K562 (cell line): ENCODE measurements at regions of chr22 and their contacts with region 1.

Region 1: DNA sequence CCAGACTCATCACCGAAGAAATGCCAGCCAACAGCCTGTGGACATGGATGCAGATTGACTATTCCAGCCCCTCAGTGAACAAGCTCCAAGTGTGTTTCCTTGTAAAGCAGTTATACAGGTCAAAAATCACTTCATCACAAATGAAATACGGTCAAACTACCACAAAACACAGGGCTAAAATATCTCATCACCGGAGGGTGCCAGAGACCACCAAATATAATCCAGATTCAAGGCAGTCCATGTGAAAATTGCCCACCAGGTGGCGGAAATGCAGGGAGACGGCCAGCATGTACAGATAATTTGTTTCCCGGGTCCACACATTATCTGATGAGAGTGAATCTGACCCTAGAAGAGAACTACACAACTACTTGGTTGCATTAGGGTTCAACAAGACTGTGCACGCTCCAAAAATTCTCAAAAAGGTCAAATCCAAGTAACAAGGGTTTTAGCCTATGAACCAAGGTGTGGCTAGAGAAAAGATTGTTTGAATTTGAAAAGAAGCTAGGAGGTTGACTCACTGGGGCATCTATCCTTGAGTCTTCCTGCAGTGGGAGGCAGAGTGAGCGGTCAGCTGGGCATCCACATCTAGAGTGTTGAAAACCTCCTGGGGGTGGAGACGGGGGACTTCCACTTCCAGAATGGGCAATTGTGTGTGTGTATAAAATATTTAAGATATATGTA is 71.7 kb downstream of the IGLL5 start:
- DNase-seq: peak; percentile 98 to 99 (median 99)
- ATAC-seq: peak; percentile 85
- H3K4me3 ChIP-seq: no peak overlapping the region
- H3K27ac ChIP-seq: no peak overlapping the region
- H3K4me1 ChIP-seq: no peaks in the 10 kb centered on the region
- H3K27me3 ChIP-seq: peaks cover 3 to 6% of the 10 kb centered on the region in 2 experiments; a peak in 3 of 5 replicates
- CTCF ChIP-seq: no peak
- EP300 ChIP-seq: no peak
- POLR2A ChIP-seq: no peak
- RAD21 ChIP-seq: no peak

Region 2: DNA sequence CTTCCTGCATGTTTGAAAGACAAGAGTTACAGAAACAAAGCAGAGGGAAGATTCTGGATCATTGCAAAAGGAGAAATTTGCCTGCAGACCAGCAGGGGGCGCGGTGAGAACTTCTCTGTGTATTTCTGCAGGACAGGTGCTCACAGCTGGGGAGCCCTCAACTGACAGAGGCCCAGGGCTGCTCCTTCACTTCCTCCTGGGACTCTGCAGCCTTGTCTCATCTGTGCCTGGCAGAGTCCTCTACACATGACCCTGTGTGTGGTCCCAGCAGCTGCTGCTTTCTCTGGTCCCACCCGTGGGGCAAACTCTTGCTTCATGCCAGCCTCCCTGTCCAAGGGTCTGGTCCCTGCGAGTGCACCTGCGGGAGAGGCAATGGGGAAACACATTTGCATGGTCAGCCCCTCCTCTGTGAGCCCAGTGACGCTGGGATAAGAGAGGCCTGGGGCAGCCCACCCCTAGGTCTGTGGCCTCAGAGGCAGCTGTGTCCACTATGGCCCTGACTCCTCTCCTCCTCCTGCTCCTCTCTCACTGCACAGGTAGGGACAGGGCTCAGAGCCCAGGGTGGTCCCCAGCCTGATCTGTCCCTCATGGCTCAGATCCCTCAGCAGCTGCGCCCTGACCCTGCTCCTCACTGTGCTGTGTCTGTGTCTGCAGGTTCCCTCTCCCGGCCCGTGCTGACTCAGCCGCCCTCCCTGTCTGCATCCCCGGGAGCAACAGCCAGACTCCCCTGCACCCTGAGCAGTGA is 757.9 kb before region 1 on chr22:
- CTCF ChIA-PET with region 1: no interaction called
- POLR2A ChIA-PET with region 1: no interaction called
- in situ Hi-C with region 1: no loop called
- intact Hi-C with region 1: loop called (anchors 5 kb)
- DNase-seq: peak; percentile 90 to 95 (median 91)
- ATAC-seq: peak; percentile 87
- H3K4me3 ChIP-seq: no peak overlapping the region
- H3K27ac ChIP-seq: no peak overlapping the region
- H3K4me1 ChIP-seq: peaks cover 0 to 13% of the 10 kb centered on the region in 2 experiments; a peak in 2 of 5 replicates
- H3K27me3 ChIP-seq: peaks cover 44 to 70% of the 10 kb centered on the region in 2 experiments
- CTCF ChIP-seq: peak in 2 of 3 experiments; percentile 99 to 100; a peak in 4 of 6 replicates
- EP300 ChIP-seq: 0 out of 2 replicates have a peak, but pooled peaks have one; percentile 19
- POLR2A ChIP-seq: no peak
- RAD21 ChIP-seq: peak; percentile 36 to 83

Region 3: GRCh38 chr22:22748297-22748743 is 211.0 kb before region 1 on chr22:
- CTCF ChIA-PET with region 1: interaction called, 54 read pairs
- POLR2A ChIA-PET with region 1: interaction called, 5 read pairs
- in situ Hi-C with region 1: no loop called
- intact Hi-C with region 1: loop called (anchors 1 kb)
- DNase-seq: peak; percentile 73 to 86 (median 82)
- ATAC-seq: peak; percentile 87
- H3K4me3 ChIP-seq: no peak overlapping the region
- H3K27ac ChIP-seq: no peak overlapping the region
- H3K4me1 ChIP-seq: no peaks in the 10 kb centered on the region
- H3K27me3 ChIP-seq: peaks cover 4 to 30% of the 10 kb centered on the region in 2 experiments; a peak in 3 of 5 replicates
- CTCF ChIP-seq: no peak
- EP300 ChIP-seq: no peak
- POLR2A ChIP-seq: no peak
- RAD21 ChIP-seq: peak in 1 of 2 experiments; percentile 76; a peak in 2 of 4 replicates

Region 4: GRCh38 chr22:22810018-22810427 is 149.3 kb before region 1 on chr22:
- CTCF ChIA-PET with region 1: interaction called, 118 read pairs
- POLR2A ChIA-PET with region 1: interaction called, 9 read pairs
- in situ Hi-C with region 1: no loop called
- intact Hi-C with region 1: loop called (anchors 1 kb)
- DNase-seq: peak; percentile 97 to 100 (median 98)
- ATAC-seq: peak; percentile 96
- H3K4me3 ChIP-seq: no peak overlapping the region
- H3K27ac ChIP-seq: no peak overlapping the region
- H3K4me1 ChIP-seq: peaks cover 0 to 4% of the 10 kb centered on the region in 2 experiments; a peak in 1 of 5 replicates
- H3K27me3 ChIP-seq: peaks cover 8 to 19% of the 10 kb centered on the region in 2 experiments; a peak in 3 of 5 replicates
- CTCF ChIP-seq: no peak
- EP300 ChIP-seq: no peak
- POLR2A ChIP-seq: no peak
- RAD21 ChIP-seq: no peak

Region 5: DNA sequence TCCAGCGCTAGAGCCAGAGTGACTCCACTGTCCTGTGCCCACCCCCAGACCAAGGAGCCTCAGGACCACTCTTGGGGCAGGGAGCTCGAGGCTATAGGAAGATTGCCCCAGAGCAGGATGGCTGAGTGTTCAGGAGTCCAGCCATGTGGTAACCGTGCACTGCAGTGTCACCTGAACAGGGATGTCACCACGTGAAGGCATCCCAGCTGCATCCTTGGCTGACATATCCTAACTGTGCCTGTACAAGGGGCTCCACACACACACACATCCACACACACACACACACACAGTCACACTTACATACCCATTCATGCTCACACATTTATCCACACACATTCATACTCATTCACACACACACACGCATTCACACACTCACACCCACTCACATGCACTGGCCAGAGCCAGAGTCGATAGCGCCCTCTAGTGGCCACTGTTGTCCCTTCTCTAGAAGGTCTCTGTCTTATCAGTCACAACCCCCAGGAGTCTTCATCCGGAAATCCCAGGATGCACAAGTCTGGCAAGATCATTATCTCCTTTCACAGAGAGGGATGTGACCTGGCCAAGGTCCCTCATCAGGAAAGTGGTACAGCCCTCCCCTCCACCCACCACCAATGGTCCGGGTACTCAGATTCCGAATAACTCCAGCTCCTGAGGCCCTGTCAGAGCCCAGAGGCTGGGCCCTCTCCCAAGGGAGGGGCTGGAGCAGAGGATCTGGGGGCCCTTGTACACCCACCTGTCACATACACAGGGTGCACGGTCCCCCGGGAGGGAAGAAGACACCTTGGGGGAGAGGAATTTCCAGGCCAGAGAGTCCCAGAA is 16.6 kb before region 1 on chr22:
- CTCF ChIA-PET with region 1: interaction called, 30 read pairs
- POLR2A ChIA-PET with region 1: interaction called, 17 read pairs
- in situ Hi-C with region 1: no loop called
- intact Hi-C with region 1: no loop called
- DNase-seq: peak; percentile 99 to 100 (median 100)
- ATAC-seq: peak; percentile 94
- H3K4me3 ChIP-seq: no peak overlapping the region
- H3K27ac ChIP-seq: no peak overlapping the region
- H3K4me1 ChIP-seq: peaks cover 0 to 3% of the 10 kb centered on the region in 2 experiments; a peak in 1 of 5 replicates
- H3K27me3 ChIP-seq: peaks cover 19 to 38% of the 10 kb centered on the region in 2 experiments; a peak in 4 of 5 replicates
- CTCF ChIP-seq: no peak
- EP300 ChIP-seq: no peak
- POLR2A ChIP-seq: no peak
- RAD21 ChIP-seq: no peak

Region 6: DNA sequence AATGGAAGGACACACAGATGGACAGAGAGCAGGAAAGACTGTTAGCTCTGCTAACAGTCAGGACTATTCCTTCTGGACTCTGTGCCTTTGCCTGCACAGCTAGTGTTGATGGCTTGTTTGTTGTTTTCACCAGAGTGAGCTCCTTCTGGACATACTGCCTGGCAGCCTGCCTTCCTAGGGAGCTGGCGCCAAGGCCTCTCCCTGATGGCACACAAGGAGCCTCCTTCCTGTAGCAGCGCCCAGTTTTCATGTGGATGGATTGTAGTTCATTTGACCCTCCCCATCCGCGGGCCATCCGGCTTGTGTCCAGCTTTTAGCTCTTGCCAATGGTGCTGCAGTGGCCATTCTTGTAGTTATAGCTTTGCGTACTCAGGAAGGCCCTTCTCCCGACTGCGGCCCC is 204.4 kb after region 1 on chr22:
- CTCF ChIA-PET with region 1: no interaction called
- POLR2A ChIA-PET with region 1: no interaction called
- in situ Hi-C with region 1: no loop called
- intact Hi-C with region 1: no loop called
- DNase-seq: no peak
- ATAC-seq: no peak
- H3K4me3 ChIP-seq: no peak overlapping the region
- H3K27ac ChIP-seq: no peak overlapping the region
- H3K4me1 ChIP-seq: peaks cover 0 to 10% of the 10 kb centered on the region in 2 experiments; a peak in 3 of 5 replicates
- H3K27me3 ChIP-seq: peaks cover 76 to 89% of the 10 kb centered on the region in 2 experiments
- CTCF ChIP-seq: no peak
- EP300 ChIP-seq: no peak
- POLR2A ChIP-seq: no peak
- RAD21 ChIP-seq: no peak

Region 7: DNA sequence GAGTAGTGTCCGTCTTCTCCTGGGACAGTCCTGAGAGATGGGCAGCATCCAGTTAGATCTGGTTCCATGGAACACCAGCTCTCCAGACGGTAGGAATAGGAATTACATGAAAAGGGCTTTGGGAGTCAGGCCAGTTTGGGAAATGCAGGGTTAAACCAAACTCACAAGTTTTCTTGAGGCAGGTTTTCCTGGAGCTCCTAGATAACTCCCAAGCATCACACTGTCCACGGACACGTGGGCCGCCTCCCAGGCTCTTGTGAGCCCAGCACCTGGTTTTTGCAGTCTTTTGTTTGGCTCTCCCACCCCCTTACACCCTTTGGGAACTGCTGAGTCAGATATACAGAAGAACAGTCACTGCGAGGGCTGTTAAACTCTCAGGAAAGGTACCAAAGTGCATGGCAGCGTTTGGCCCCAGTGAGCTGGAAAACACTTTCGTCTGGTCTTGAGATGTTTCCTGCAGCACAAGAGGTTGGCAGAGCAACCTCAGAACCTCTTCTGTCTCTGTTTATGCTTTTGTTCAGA is 311.0 kb after region 1 on chr22:
- CTCF ChIA-PET with region 1: interaction called, 15 read pairs
- POLR2A ChIA-PET with region 1: interaction called, 3 read pairs
- in situ Hi-C with region 1: loop called (anchors 5 kb)
- intact Hi-C with region 1: no loop called
- DNase-seq: peak in 3 of 4 experiments; percentile 61 to 82 (median 77)
- ATAC-seq: peak; percentile 31
- H3K4me3 ChIP-seq: no peak overlapping the region
- H3K27ac ChIP-seq: no peak overlapping the region
- H3K4me1 ChIP-seq: peaks cover 4 to 34% of the 10 kb centered on the region in 2 experiments; a peak in 4 of 5 replicates
- H3K27me3 ChIP-seq: no peaks in the 10 kb centered on the region
- CTCF ChIP-seq: peak in 2 of 3 experiments; percentile 75 to 87; a peak in 4 of 6 replicates
- EP300 ChIP-seq: no peak
- POLR2A ChIP-seq: no peak
- RAD21 ChIP-seq: peak in 1 of 2 experiments; percentile 82; a peak in 2 of 4 replicates